Activated naive CD4-positive, alpha-beta T cell treated with anti-CD3 and anti-CD28 coated beads for 36 hours (primary cell): ENCODE measurements at regions of chr11 and their contacts with region 1.

Region 1: DNA sequence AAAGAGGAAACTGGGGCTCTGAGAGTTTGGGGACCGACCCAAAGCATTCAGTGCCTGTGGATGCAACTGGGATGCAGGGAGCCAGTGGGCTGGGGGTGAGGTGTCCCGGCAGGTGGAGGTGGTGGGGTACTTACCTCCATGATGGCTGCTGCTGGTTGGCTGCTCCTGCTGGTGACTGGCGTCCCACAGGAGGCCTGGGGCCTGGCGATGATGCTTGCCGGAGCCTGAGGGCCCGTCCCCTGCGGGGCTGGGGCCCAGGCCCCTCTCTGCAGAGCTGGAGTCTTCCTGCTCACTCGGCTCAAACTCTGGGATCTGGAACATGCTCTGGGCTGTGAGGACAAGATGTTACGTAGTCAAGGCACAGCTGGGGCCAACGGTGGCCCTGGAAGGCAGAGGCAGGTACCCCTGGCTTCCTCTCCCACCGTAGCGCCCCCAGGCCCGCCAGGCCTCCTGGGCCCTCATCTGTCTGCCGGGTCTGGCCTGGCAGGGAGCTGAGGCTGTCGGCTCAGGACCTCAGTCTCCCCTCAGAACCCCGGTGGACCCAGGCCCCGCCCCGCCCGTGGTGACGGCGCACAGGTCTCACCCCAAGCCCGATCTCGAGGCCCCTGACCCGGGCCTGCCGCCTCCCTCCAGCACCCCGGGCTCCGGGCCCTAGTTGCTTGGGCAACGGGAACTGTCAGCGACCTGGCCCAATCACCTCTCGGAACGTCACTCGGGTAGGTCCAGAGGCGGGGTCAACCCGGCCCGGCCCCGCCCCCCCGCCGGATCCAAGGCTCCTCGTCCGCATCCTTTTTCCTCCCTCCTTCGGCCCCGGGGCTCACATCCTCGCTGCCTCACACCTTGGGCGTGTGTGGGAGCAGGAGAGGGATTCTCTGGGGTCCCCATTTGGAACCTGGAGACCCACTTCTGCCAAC is at the start of gene BAD:
- DNase-seq: peak; percentile 95
- H3K4me3 Mint-ChIP-seq: peak within 1 kb of the TSS; percentile 82
- H3K27ac Mint-ChIP-seq: peak within 1 kb of the TSS; percentile 90
- H3K4me1 Mint-ChIP-seq: peaks cover 17% of the 10 kb centered on the region
- H3K27me3 Mint-ChIP-seq: no peaks in the 10 kb centered on the region
- total RNA-seq, gene BAD: 12.8 to 14.3 TPM

Region 2: GRCh38 chr11:64225612-64226506 is 58.4 kb before region 1 on chr11 and contains the starts of genes NUDT22 and TRPT1:
- CTCF ChIA-PET with region 1: no interaction called
- intact Hi-C with region 1: loop called (anchors 1 kb)
- DNase-seq: peak; percentile 94
- H3K4me3 Mint-ChIP-seq: peak within 1 kb of the TSS; percentile 87
- H3K27ac Mint-ChIP-seq: peak within 1 kb of the TSS; percentile 90
- H3K4me1 Mint-ChIP-seq: peaks cover 34% of the 10 kb centered on the region
- H3K27me3 Mint-ChIP-seq: no peaks in the 10 kb centered on the region
- total RNA-seq, gene NUDT22: 51.4 to 51.9 TPM
- total RNA-seq, gene TRPT1: 18.2 to 18.3 TPM

Region 3: GRCh38 chr11:64294774-64295173 is 10.5 kb after region 1 on chr11:
- CTCF ChIA-PET with region 1: no interaction called
- intact Hi-C with region 1: no loop called
- DNase-seq: no peak
- H3K4me3 Mint-ChIP-seq: no peak overlapping the region
- H3K27ac Mint-ChIP-seq: no peak overlapping the region
- H3K4me1 Mint-ChIP-seq: peaks cover 14% of the 10 kb centered on the region
- H3K27me3 Mint-ChIP-seq: peaks cover 66% of the 10 kb centered on the region